ENCODE measurements at regions of chr6 and their contacts with region 1.

Region 1: DNA sequence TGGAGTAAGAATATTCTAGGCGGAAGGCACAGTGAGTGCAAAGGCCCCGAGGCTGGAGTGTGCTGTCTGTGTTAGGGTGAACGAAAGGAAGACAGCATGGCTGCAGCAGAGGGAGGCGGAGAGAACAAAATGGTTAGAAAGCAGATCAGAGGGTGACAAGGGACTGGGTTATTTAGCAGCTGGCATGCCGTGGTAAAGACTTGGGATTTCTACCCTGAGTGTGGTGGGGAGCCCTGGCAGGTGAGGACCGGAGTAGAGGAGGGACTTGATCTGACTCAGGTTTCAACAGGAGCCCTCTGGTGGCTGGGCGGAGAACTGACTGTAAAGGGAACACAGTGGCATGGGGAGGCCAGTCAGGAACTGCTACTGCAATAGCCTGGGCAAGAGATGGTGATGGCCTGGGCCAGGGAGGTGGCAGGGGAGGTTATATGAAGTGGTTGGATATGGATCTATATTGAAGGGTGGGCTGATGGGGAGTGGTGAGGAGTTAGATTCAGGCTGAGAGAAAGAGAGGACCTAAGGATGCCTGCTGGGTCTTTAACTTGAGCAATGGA is 38.0 kb downstream of the PIM1 start:
- DNase-seq: peak; percentile 77
- ATAC-seq: peak; percentile 94
- H3K4me3 ChIP-seq: no peak overlapping the region
- H3K27ac ChIP-seq: no peak overlapping the region
- H3K4me1 ChIP-seq: peaks cover 13 to 36% of the 10 kb centered on the region in 2 experiments
- H3K27me3 ChIP-seq: no peaks in the 10 kb centered on the region
- CTCF ChIP-seq: peak; percentile 92 to 95 (median 94)
- POLR2A ChIP-seq: no peak
- RAD21 ChIP-seq: peak; percentile 77

Region 2: DNA sequence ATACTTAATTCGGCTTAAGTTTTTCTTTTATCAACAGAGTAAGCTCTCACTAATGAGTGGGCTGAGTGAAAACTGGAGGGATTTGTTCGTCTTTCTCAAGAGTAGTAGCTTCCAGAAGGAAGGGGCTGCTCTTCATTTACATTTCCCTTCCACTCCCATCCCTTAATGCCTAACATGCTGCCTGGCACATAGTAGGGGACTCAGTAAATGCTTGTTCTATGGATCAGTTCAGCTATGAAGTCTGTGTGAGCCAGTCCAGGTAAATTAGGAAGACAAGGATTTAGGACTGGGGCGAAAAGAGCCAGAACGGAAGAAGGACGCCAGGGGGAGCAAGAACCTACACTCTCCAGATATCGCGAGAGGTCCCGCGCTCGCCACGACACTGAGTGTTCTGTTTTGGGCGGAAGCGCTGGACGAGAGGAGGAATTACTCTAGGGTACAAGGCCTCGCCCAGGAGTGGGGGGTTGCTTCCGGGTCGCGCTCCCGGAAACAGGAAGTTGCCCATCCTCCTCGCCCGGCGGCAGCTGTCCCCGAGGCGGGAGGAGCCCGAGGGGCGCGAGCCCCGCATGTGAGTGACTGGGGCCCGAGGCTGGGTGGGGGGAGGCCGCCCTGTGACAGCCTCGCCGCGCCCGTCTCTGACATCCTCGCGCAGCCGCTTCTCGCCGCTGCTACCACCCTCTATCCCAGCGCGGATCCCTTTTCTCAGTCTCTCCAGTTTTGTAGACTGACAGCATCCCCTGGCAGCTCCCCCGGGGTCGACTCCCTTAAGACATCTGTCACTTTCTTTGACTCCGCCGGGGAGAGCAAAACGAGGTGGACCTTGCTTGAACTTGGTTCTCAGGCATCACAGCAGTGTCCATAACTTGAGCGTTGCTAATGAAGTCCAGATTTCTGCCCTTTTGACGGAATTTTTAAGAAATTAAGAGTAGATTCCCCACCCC is 322.2 kb before region 1 on chr6 and contains the start of gene C6orf89:
- CTCF ChIA-PET with region 1: interaction called, 6 read pairs
- POLR2A ChIA-PET with region 1: no interaction called
- RAD21 ChIA-PET with region 1: no interaction called
- intact Hi-C with region 1: loop called (anchors 5 kb)
- DNase-seq: peak; percentile 94
- ATAC-seq: peak; percentile 100
- H3K4me3 ChIP-seq: peak within 1 kb of the TSS; percentile 81 to 88
- H3K27ac ChIP-seq: peak within 1 kb of the TSS; percentile 65
- H3K4me1 ChIP-seq: peaks cover 8 to 18% of the 10 kb centered on the region in 2 experiments; a peak in 3 of 4 replicates
- H3K27me3 ChIP-seq: no peaks in the 10 kb centered on the region
- CTCF ChIP-seq: peak; percentile 80 to 87 (median 87)
- POLR2A ChIP-seq: no peak
- RAD21 ChIP-seq: peak; percentile 73
- total RNA-seq, gene C6orf89: 32.9 TPM

Region 3: GRCh38 chr6:36912586-36912985 is 295.4 kb before region 1 on chr6:
- CTCF ChIA-PET with region 1: no interaction called
- POLR2A ChIA-PET with region 1: no interaction called
- RAD21 ChIA-PET with region 1: no interaction called
- intact Hi-C with region 1: loop called (anchors 10 kb)
- DNase-seq: no peak
- ATAC-seq: peak; percentile 21; the same call in 1 of the 2 replicates
- H3K4me3 ChIP-seq: no peak overlapping the region
- H3K27ac ChIP-seq: no peak overlapping the region
- H3K4me1 ChIP-seq: peaks cover 24 to 47% of the 10 kb centered on the region in 2 experiments
- H3K27me3 ChIP-seq: no peaks in the 10 kb centered on the region
- CTCF ChIP-seq: no peak
- POLR2A ChIP-seq: no peak
- RAD21 ChIP-seq: peak; percentile 27; the same call in 1 of the 2 replicates

Region 4: DNA sequence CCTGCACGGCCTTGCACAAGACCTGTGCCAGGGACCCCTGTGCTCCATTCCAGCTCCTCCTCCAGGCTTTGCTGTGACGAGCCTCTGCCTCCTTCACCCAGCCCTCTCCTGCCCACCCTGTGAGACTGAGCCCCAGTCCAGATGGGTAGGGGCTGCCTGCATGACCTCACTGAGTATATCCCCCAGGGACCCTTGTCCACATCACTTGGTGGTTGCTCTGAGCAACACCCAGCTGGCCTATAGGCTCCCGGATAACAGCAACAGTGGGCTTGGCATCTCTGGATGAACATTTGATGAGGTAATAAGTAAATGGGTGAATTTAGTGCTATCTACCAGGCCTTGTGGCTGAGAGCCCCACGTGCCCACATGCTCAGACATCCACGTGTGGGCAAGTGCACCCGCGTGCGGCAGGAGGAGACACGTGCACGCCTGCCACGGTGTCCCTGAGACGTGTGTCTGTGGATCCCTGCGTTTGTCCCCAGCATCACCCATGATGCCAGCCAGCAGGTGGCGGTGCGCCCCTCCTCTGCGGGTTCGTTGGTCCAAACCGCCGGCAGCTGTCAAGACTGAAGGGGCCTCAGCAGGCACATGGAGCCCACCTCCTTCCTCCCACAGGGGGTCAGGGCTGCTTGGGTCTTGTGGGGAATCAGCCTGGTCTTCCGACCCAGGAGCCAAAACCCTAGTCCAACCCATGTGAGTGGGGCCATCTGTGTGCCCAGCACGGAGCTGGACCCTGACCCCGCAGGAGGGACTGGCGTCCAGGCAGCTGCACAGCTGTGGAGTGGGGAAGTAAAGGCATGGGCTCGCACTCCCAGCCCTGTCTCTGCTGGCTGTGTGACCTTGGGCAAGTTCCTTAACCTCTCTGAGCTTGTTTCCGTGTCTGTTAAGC is 156.6 kb before region 1 on chr6:
- CTCF ChIA-PET with region 1: interaction called, 23 read pairs
- POLR2A ChIA-PET with region 1: no interaction called
- RAD21 ChIA-PET with region 1: interaction called, 5 to 6 read pairs
- intact Hi-C with region 1: loop called (anchors 1 kb)
- DNase-seq: peak; percentile 44
- ATAC-seq: peak; percentile 89
- H3K4me3 ChIP-seq: no peak overlapping the region
- H3K27ac ChIP-seq: no peak overlapping the region
- H3K4me1 ChIP-seq: peaks cover 8 to 38% of the 10 kb centered on the region in 2 experiments
- H3K27me3 ChIP-seq: no peaks in the 10 kb centered on the region
- CTCF ChIP-seq: peak in 2 of 3 experiments; percentile 90 to 91; a peak in 4 of 6 replicates
- POLR2A ChIP-seq: no peak
- RAD21 ChIP-seq: no peak

Region 5: GRCh38 chr6:37092923-37093920 is 114.8 kb before region 1 on chr6:
- CTCF ChIA-PET with region 1: no interaction called
- POLR2A ChIA-PET with region 1: no interaction called
- RAD21 ChIA-PET with region 1: no interaction called
- intact Hi-C with region 1: no loop called
- DNase-seq: no peak
- ATAC-seq: no peak
- H3K4me3 ChIP-seq: no peak overlapping the region
- H3K27ac ChIP-seq: no peak overlapping the region
- H3K4me1 ChIP-seq: no peaks in the 10 kb centered on the region; a peak in 1 of 4 replicates
- H3K27me3 ChIP-seq: no peaks in the 10 kb centered on the region
- CTCF ChIP-seq: no peak
- POLR2A ChIP-seq: no peak
- RAD21 ChIP-seq: no peak

Region 6: DNA sequence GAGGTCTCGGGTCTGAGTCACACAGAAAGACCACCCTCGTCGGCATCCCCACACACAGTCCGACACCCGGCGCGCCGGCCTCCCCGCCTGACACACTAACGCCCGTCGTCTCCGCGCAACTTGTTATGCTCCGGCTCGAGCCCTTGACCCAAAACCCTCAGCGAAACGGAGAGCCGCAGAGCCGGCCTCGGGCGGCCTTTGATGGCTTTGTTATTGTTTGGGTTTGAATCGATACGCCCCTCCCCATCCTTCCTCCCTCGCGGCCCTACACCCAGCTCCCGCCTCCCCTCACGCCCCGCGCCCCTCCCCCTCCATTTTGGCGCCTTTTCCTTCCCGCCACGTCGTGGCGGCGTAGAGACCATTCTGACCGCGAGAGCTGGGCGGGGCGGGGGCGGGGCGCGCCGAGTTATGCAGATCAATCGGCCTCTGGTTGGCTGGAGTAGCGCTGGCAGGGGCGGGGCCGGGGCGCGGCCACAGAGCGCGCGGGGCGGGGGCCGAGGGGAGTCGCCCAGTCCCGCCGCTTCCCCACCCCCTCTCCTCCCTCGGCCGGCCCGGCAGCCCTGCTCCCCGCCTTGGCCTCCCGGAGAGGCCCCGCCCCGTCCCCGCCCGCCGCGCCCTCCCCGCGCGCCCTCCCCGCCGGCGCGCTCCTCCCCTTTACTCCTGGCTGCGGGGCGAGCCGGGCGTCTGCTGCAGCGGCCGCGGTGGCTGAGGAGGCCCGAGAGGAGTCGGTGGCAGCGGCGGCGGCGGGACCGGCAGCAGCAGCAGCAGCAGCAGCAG is 38.3 kb before region 1 on chr6 and contains the start of gene PIM1:
- CTCF ChIA-PET with region 1: interaction called, 18 read pairs
- POLR2A ChIA-PET with region 1: no interaction called
- RAD21 ChIA-PET with region 1: interaction called in 1 of 2 experiments, 4 read pairs
- intact Hi-C with region 1: loop called (anchors 2 kb)
- DNase-seq: peak; percentile 87
- ATAC-seq: peak; percentile 87
- H3K4me3 ChIP-seq: peak within 1 kb of the TSS; percentile 77 to 81
- H3K27ac ChIP-seq: peak within 1 kb of the TSS; percentile 73; the same call in 1 of the 2 replicates
- H3K4me1 ChIP-seq: peaks cover 19 to 34% of the 10 kb centered on the region in 2 experiments
- H3K27me3 ChIP-seq: no peaks in the 10 kb centered on the region
- CTCF ChIP-seq: no peak
- POLR2A ChIP-seq: peak; percentile 25
- RAD21 ChIP-seq: no peak
- total RNA-seq, gene PIM1: 26.2 TPM

Measured in HCT116 (cell line).